Caco-2 (cell line): ENCODE measurements at regions of chr12 and their contacts with region 1.

Region 1: DNA sequence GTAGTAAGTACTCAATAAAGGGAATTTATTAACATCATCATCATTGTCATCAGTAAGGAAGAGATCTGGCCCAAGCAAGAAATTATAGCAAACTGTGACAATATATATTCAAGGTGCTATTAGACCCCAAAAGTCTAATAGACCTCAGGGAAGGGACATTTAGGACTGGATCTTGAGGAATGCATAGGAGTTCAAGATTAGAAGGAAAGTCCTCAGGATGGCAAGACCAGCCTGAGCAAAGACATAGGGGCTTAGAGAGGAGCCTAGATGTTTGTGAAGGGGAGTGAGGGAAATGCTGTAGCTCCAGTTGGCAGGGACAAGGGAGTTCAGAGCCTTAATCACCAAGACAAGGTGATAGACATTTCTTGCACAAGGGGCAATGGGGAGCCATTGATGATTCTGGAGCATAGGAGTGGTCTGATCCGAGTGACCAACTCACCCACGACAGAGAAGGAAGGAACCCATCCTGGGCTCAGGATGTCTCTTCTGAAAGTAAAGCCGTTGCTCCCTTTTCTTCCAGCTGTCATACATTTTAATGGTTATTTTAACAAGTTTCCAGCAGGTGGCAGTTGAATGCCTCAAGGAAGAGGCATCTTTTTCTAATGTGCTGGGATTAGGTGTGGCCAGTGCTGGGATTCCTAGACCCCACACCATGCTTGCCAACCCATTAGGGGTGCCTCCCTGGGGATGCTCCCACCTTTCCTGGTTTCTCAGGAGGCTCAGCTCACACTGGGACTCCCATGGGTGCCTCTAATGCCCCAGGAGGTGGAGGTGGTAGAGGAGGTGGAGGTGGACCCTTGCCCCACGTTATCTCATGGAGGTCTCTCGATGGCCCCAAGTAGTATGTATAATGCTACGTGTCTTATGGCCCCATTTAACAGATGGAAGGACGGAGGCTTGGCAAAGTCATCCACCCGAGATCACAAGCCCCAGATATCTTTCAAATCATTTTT is 37.8 kb downstream of the PHETA1 start:
- DNase-seq: peak in 1 of 2 experiments; percentile 49
- H3K4me3 ChIP-seq: no peak overlapping the region
- H3K4me3 Mint-ChIP-seq: no peak overlapping the region
- H3K27ac Mint-ChIP-seq: no peak overlapping the region
- H3K4me1 ChIP-seq: no peaks in the 10 kb centered on the region
- H3K4me1 Mint-ChIP-seq: no peaks in the 10 kb centered on the region
- H3K27me3 ChIP-seq: no peaks in the 10 kb centered on the region
- H3K27me3 Mint-ChIP-seq: no peaks in the 10 kb centered on the region
- CTCF ChIP-seq: peak; percentile 52 to 59

Region 2: DNA sequence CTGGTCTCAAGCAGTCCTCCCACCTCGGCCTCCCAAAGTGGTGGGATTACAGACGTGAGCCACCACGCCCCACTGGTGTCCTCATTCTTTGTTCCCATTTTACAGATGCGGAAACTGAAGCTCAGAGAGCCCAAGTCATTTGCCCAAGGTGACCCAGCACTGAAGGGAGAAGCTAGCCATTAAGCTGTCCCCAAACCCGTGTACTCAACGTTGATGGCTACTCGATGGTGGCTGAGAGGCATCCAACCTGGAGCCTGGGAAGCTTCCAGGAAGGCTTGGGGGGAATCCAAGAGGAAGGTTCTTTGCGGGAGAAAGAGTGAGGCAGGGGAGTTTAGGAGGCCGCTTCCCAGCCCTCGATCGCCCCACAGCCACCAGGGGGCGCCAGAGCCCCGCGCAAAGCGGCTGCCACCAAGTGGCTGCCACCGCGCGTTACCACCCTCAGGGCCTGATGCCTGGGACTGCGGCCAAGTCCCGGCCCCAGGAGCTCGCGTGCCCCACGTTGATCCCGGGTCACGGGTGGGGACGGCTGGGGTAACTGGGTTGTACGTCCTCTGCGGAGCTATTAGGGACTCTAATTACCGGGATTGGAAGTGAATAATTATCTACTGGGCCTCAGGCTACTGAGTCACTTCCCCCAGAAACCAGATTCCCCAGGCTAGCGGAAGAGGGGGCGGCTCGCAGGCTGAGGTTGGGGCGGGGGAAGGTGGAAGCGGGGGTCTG is 65.8 kb after region 1 on chr12:
- CTCF ChIA-PET with region 1: interaction called, 12 read pairs
- POLR2A ChIA-PET with region 1: no interaction called
- intact Hi-C with region 1: loop called (anchors 2 kb)
- DNase-seq: peak; percentile 75 to 91
- H3K4me3 ChIP-seq: no peak overlapping the region
- H3K4me3 Mint-ChIP-seq: no peak overlapping the region
- H3K27ac Mint-ChIP-seq: peak overlapping the region; percentile 35
- H3K4me1 ChIP-seq: no peaks in the 10 kb centered on the region
- H3K4me1 Mint-ChIP-seq: no peaks in the 10 kb centered on the region
- H3K27me3 ChIP-seq: no peaks in the 10 kb centered on the region
- H3K27me3 Mint-ChIP-seq: no peaks in the 10 kb centered on the region
- CTCF ChIP-seq: peak; percentile 99 to 100